PC-3 (cell line): ENCODE measurements at regions of chr13 and their contacts with region 1.

Region 1: GRCh38 chr13:45167611-45168556 is 33.0 kb downstream of the KCTD4 start:
- DNase-seq: peak; percentile 95
- ATAC-seq: peak; percentile 90
- H3K4me3 ChIP-seq: no peak overlapping the region
- H3K27ac ChIP-seq: peak overlapping the region; percentile 68
- H3K4me1 ChIP-seq: peaks cover 17% of the 10 kb centered on the region
- H3K27me3 ChIP-seq: no peaks in the 10 kb centered on the region
- CTCF ChIP-seq: no peak

Region 2: DNA sequence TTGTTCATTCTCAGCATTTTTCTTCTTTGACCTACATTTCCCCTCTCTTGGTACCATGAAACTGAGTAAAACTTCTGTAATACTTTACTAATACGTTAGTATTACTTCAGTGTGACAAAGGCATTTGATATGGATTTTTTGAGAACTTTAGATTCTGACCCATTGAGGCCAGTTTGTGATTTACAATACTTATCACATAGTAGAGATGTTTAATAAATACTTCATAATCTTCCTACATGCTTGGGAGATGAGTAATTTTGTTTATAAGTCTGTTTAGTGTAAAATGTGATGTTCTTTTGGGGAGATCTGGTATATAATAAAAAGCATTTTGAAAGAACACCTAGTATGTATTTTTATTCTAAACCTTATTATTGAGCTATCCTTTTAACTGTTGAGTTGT is 17.9 kb before region 1 on chr13:
- CTCF ChIA-PET with region 1: no interaction called
- POLR2A ChIA-PET with region 1: interaction called, 18 read pairs
- intact Hi-C with region 1: no loop called
- DNase-seq: no peak
- ATAC-seq: no peak
- H3K4me3 ChIP-seq: no peak overlapping the region
- H3K27ac ChIP-seq: no peak overlapping the region
- H3K4me1 ChIP-seq: peaks cover 7% of the 10 kb centered on the region
- H3K27me3 ChIP-seq: no peaks in the 10 kb centered on the region
- CTCF ChIP-seq: no peak

Region 3: GRCh38 chr13:45257638-45258338 is 89.9 kb after region 1 on chr13:
- CTCF ChIA-PET with region 1: interaction called, 19 read pairs
- POLR2A ChIA-PET with region 1: no interaction called
- intact Hi-C with region 1: no loop called
- DNase-seq: peak; percentile 12
- ATAC-seq: no peak
- H3K4me3 ChIP-seq: no peak overlapping the region
- H3K27ac ChIP-seq: no peak overlapping the region
- H3K4me1 ChIP-seq: peaks cover 28% of the 10 kb centered on the region
- H3K27me3 ChIP-seq: no peaks in the 10 kb centered on the region
- CTCF ChIP-seq: no peak